ENCODE measurements at regions of chr10 and their contacts with region 1.

Region 1: GRCh38 chr10:21825345-21825744 is 178.2 kb downstream of the DNAJC1 start:
- DNase-seq: no peak
- ATAC-seq: no peak
- H3K4me3 ChIP-seq: no peak overlapping the region
- H3K27ac ChIP-seq: no peak overlapping the region
- H3K4me1 ChIP-seq: no peaks in the 10 kb centered on the region
- H3K27me3 ChIP-seq: no peaks in the 10 kb centered on the region
- CTCF ChIP-seq: no peak

Region 2: GRCh38 chr10:21771219-21771618 is 54.1 kb before region 1 on chr10:
- intact Hi-C with region 1: no loop called
- DNase-seq: no peak
- ATAC-seq: no peak
- H3K4me3 ChIP-seq: no peak overlapping the region
- H3K27ac ChIP-seq: no peak overlapping the region
- H3K4me1 ChIP-seq: no peaks in the 10 kb centered on the region
- H3K27me3 ChIP-seq: no peaks in the 10 kb centered on the region
- CTCF ChIP-seq: no peak

Region 3: DNA sequence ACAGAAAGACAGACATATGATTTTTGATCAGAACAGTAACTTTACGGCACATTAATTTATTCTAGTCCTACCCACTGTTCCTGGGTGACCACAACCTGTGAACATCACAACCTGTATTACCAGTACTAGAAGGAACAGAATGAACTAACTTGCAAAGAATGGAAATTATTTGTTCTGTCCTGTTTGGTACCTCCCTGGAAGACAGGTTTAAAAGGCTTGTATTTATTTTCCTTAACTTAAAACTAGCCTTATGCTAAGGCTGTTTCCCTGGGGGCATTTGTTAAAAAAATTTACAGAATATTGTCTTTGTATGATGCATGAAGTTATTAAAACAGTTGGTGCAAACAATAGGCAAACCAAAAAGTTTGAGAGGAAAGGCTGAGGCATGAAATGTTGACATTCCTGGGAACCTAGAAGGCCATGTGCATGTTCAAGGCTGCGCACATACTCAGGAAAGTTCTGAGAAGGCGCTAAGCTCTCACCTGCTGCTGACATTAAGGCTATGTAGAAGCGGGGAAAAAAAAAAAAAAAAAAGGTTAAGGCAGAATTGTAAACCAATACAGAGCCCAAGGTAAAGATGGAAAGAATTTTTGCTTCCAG is 45.6 kb after region 1 on chr10:
- intact Hi-C with region 1: loop called in 1 of 2 experiments (anchors 10 kb)
- DNase-seq: no peak
- ATAC-seq: no peak
- H3K4me3 ChIP-seq: no peak overlapping the region
- H3K27ac ChIP-seq: no peak overlapping the region
- H3K4me1 ChIP-seq: no peaks in the 10 kb centered on the region
- H3K27me3 ChIP-seq: no peaks in the 10 kb centered on the region
- CTCF ChIP-seq: no peak

Region 4: GRCh38 chr10:21978191-21978862 is 153.0 kb after region 1 on chr10:
- intact Hi-C with region 1: no loop called
- DNase-seq: no peak
- ATAC-seq: no peak
- H3K4me3 ChIP-seq: no peak overlapping the region
- H3K27ac ChIP-seq: no peak overlapping the region
- H3K4me1 ChIP-seq: no peaks in the 10 kb centered on the region
- H3K27me3 ChIP-seq: no peaks in the 10 kb centered on the region
- CTCF ChIP-seq: no peak

Region 5: GRCh38 chr10:23158370-23158769 is 1333.0 kb after region 1 on chr10:
- intact Hi-C with region 1: no loop called
- DNase-seq: no peak
- ATAC-seq: peak; percentile 67 to 80 (median 70)
- H3K4me3 ChIP-seq: no peak overlapping the region
- H3K27ac ChIP-seq: no peak overlapping the region
- H3K4me1 ChIP-seq: peaks cover 3% of the 10 kb centered on the region
- H3K27me3 ChIP-seq: peaks cover 0 to 13% (median 0%) of the 10 kb centered on the region in 3 donors
- CTCF ChIP-seq: peak; percentile 75

Measured in psoas muscle (tissue), 8 donors.